ENCODE measurements at regions of chr7 and their contacts with region 1.

Region 1: DNA sequence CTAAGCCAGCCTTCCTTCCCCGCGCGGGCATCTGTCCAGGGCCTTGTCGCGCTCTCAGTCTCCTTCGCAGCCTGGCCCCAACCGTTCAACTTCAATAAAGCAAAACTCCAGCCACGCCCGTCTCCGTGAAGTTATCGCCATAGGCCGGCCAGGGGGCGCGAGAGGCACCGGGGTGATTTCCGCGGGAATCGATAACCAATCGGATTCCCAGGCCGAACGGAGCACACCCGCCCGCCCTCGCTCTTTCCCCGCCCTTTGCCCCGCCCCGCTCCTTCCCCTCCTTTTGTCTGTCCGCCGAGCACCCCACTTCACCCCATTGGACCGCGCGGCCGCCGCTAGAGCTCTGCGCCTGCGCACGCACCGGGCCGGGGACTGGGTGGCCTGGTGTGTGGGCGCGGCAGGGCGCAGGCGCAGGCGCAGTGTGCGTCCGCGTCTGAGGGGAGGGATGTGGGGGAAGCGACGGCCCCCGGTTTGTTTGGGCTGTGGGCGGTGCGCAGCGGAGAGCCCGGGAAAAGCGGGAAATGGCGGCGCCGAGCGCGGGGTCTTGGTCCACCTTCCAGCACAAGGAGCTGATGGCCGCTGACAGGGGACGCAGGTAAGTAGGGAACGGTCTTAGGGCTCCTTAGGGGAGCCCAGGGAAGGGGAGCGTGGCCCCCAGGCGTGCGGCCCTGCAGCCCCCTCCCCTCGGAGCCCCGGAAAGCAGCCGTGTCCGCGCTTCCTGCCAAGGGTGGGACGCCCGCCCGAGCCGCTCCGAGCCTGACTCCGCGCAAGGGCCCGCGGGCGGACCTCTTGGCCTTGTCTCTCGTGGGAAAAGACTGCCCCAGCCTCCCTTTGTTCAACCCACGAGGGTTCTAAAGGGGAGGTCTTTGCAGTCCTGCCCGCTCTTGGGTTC is at the start of gene CASP2:
- DNase-seq: peak; percentile 90 to 98
- H3K4me3 ChIP-seq: peak within 1 kb of the TSS; percentile 77
- H3K27ac ChIP-seq: peak within 1 kb of the TSS; percentile 55
- H3K4me1 ChIP-seq: peaks cover 60% of the 10 kb centered on the region
- H3K27me3 ChIP-seq: no peaks in the 10 kb centered on the region
- CTCF ChIP-seq: no peak; the same call in 1 of the 2 replicates
- total RNA-seq, gene CASP2: 52.7 and 67.2 TPM in 2 replicates

Region 2: GRCh38 chr7:143248761-143249354 is 39.3 kb before region 1 on chr7:
- CTCF ChIA-PET with region 1: interaction called, 3 read pairs
- POLR2A ChIA-PET with region 1: interaction called, 4 read pairs
- intact Hi-C with region 1: loop called (anchors 1 kb)
- DNase-seq: peak; percentile 91 to 100
- H3K4me3 ChIP-seq: peak overlapping the region; percentile 32; the same call in 1 of the 2 replicates
- H3K27ac ChIP-seq: peak overlapping the region; percentile 95
- H3K4me1 ChIP-seq: peaks cover 76% of the 10 kb centered on the region
- H3K27me3 ChIP-seq: no peaks in the 10 kb centered on the region
- CTCF ChIP-seq: no peak

Region 3: DNA sequence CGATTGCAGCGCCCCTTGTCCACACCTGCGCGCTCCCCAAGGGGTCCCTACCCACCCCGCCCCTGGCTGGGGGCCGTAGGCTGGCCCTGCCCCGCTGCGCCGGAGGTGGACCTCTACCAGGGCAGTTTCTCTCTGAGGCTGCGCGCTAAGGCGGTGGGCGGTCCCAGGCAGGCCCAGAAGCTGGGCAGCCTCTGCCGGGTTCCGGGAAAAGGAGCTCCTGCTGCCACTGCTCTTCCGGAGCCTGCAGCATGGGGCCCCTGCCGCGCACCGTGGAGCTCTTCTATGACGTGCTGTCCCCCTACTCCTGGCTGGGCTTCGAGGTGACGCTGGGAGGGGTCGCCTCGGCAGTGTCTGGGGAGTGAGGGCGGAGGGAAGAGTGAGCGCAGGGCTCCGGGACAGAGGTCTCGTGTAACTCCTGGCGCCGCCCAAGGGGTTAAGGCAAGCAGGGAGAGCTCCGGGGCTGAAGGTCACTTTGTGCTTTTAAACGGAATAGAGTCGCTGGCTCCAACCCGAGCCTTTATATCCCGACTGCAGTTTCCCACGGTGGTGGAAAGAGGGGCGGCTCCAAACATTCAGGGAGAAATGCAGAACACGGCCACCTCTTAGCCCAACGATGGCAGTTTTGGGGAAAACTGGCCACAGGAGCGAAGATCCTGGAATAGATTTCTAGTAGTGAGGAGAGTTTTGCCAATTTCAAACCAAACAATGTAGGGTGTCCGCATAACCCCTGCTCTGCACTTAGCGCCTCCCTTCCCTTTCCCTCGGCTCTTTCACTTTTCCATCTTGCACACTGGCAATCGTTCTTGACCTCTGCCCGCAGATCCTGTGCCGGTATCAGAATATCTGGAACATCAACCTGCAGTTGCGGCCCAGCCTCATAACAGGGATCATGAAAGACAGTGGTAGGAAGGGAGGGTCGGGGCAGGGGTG is 24.6 kb before region 1 on chr7 and contains the start of gene GSTK1:
- CTCF ChIA-PET with region 1: interaction called, 4 read pairs
- POLR2A ChIA-PET with region 1: interaction called, 27 read pairs
- intact Hi-C with region 1: loop called (anchors 1 kb)
- DNase-seq: peak; percentile 68 to 81
- H3K4me3 ChIP-seq: peak within 1 kb of the TSS; percentile 90
- H3K27ac ChIP-seq: peak within 1 kb of the TSS; percentile 36
- H3K4me1 ChIP-seq: peaks cover 48% of the 10 kb centered on the region
- H3K27me3 ChIP-seq: no peaks in the 10 kb centered on the region
- CTCF ChIP-seq: no peak
- total RNA-seq, gene GSTK1: 239 and 244 TPM in 2 replicates

Region 4: GRCh38 chr7:143305423-143306070 is 17.4 kb after region 1 on chr7:
- CTCF ChIA-PET with region 1: interaction called, 10 read pairs
- POLR2A ChIA-PET with region 1: interaction called, 35 read pairs
- intact Hi-C with region 1: no loop called
- DNase-seq: peak in 1 of 2 experiments; percentile 72
- H3K4me3 ChIP-seq: no peak overlapping the region
- H3K27ac ChIP-seq: no peak overlapping the region
- H3K4me1 ChIP-seq: no peaks in the 10 kb centered on the region
- H3K27me3 ChIP-seq: no peaks in the 10 kb centered on the region
- CTCF ChIP-seq: peak; percentile 91

Region 5: DNA sequence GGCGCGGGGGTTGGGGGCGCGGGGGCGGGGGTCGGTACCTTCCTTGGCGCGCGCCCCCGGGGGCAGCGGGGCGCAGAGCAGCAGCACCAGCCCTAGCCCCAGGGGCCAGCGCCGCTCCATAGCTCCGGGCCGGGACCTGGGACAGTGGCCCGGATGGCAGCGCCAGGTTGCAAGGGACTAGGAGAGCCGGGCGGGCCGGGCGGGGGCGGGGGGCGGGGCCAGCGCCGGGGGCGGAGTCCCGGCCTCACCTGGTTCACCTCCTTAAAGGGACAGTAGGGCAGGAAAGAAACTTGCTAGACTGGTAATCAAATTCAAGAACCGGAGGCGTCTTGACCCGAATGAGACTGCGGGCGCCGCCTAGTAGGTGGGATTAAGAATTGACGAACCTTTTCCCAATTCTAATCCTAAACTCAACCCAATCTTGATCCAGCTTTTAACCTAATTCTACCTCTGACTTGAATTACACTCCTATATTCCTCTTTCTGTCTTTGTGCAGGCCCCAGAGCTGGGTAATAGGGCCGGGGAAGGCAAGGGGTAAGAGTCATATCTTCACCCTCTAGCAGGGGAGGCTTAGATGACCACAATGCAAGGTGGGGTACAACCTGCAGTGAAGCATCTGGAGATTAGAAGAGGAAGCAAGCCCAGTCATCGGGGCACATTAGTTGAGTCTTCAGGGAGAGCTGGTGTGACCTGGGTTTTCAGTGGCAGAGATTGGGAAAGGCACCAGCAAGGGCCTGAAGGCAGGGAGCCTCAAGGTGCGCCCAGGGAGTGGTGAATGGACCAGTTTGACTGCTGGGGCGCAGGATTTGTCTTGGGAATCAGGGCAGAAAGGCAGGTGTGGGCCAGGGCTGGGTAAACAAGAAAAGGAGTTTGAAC is 120.7 kb after region 1 on chr7 and contains the start of gene EPHA1:
- CTCF ChIA-PET with region 1: no interaction called
- POLR2A ChIA-PET with region 1: no interaction called
- intact Hi-C with region 1: loop called (anchors 2 kb)
- DNase-seq: peak; percentile 76 to 89
- H3K4me3 ChIP-seq: peak within 1 kb of the TSS; percentile 96
- H3K27ac ChIP-seq: peak within 1 kb of the TSS; percentile 33
- H3K4me1 ChIP-seq: peaks cover 23% of the 10 kb centered on the region
- H3K27me3 ChIP-seq: no peaks in the 10 kb centered on the region
- CTCF ChIP-seq: peak; percentile 83
- total RNA-seq, gene EPHA1: 35.5 and 39.3 TPM in 2 replicates

Region 6: DNA sequence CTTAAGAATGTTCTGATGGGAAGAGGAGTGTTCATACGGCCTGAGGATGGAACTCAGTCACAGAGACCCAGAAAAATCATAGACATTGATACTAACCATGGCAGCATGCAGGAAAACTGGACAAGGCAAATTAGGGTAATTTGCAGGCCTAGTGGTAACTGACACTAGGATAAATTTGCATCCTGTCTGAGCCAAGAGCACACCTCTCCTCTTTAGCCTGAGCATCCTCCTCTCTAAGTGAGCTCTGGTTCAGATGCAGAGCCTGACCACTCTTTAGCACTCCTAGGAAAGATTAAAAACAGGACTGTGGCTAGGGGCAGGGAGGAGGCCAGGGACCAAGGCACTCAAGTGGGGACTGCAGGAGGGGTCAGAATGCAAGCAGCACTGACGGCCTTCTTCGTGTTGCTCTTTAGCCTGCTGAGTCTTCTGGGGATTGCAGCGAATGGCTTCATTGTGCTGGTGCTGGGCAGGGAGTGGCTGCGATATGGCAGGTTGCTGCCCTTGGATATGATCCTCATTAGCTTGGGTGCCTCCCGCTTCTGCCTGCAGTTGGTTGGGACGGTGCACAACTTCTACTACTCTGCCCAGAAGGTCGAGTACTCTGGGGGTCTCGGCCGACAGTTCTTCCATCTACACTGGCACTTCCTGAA is 189.4 kb after region 1 on chr7 and contains the start of gene TAS2R41:
- CTCF ChIA-PET with region 1: no interaction called
- POLR2A ChIA-PET with region 1: interaction called, 12 read pairs
- intact Hi-C with region 1: no loop called
- DNase-seq: no peak
- H3K4me3 ChIP-seq: no peak within 1 kb of the TSS
- H3K27ac ChIP-seq: no peak within 1 kb of the TSS
- H3K4me1 ChIP-seq: peaks cover 7% of the 10 kb centered on the region
- H3K27me3 ChIP-seq: no peaks in the 10 kb centered on the region
- CTCF ChIP-seq: no peak
- total RNA-seq, gene TAS2R41: not detected in 2 replicates